Vagina (tissue), 2 donors: ENCODE measurements at regions of chr18 and their contacts with region 1.

Region 1: DNA sequence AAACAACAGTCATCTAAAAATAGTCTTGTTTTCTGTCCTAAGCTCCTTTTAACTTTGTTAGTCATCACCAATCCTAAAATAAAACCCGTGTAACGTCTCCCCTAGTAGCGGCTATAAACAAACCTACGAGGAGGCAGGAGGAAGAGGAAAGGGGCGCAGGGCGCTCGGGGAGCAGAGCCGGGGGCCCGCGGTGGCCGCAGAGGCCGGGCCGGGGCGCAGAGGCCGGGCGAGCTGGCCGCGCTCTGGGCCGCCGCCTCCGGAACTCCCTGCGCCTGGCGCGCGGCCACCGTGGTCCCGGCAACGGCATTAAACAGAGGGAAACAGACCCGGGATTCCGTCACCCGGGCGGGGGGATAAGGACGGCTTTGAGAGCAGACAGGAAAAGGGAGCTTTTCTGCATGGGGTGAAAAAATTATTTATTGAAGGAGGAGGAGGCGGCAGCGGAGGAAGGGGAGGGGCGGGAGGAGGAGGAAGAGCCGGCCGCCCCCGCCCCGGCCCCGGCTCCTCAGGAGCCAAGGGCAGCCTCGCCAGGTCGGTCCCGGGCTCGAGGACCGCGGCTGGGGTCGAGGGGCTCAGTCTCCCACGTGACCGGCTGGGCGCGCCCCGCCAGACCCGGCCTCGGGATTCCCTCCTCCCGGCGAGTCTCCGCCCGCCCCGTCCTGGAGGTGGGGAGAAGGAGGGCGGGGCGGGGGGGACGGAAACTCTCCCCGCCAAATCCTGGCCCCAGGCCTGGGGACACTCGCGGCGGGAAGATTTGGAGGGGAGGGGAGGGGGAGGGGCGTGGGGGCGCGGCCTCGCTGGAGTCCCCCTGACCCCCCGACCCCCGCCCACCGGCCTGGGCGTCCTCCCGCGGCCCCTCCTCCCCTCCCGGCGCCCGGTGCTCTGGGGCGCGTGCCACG is 1.8 kb upstream of the NFATC1 start:
- DNase-seq: no peak
- H3K4me3 ChIP-seq: peak overlapping the region; percentile 53 to 88
- H3K27ac ChIP-seq: peak overlapping the region; percentile 91
- H3K4me1 ChIP-seq: peaks cover 29% of the 10 kb centered on the region
- H3K27me3 ChIP-seq: no peaks in the 10 kb centered on the region
- CTCF ChIP-seq: no peak
- POLR2A ChIP-seq: no peak

Region 2: GRCh38 chr18:79069792-79070151 is 324.1 kb before region 1 on chr18:
- intact Hi-C with region 1: loop called (anchors 5 kb)
- DNase-seq: no peak
- H3K4me3 ChIP-seq: peak overlapping the region; percentile 86 to 97
- H3K27ac ChIP-seq: peak overlapping the region; percentile 96
- H3K4me1 ChIP-seq: peaks cover 26% of the 10 kb centered on the region
- H3K27me3 ChIP-seq: no peaks in the 10 kb centered on the region
- CTCF ChIP-seq: no peak
- POLR2A ChIP-seq: no peak

Region 3: DNA sequence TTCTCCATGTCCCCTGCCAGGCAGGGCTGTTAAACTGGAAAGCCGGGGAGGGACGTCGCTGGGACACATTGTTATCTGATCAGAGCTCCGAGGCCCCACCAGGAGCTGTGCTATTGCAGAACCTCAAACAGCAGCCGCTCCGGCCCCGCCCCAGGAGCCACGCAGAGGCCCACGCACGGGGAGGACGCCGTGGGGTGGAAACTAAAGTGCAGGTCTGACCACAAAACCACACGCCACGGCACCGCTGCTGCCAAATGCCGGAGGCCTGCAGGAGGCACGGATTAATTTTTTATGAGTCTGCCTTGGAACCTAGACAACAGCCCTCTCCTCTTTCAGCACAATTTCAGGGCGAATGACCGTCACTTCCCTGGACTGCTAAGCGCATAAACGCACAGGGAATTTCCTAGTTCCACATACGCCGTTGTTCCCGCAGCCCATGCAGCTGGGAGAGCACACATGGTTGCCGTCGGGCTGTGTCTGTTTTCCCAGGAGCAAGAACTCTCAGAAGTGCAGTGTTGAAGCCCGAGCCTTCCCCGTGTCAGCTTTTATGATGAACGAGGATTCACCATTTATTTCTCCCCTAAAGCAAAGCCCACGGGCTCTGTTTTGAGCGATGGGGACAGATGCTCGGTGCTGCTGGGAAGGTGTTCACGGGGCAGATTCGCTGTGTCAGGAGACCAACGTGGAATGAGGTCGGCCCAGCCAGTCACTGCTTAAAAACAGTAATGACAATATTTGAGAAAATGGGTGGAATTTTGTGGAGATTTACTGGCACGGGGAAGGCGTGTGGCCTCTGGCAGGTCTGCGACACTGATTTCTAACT is 45.5 kb after region 1 on chr18:
- intact Hi-C with region 1: no loop called
- DNase-seq: no peak
- H3K4me3 ChIP-seq: peak overlapping the region in 1 of 2 donors; percentile 9
- H3K27ac ChIP-seq: no peak overlapping the region
- H3K4me1 ChIP-seq: peaks cover 20% of the 10 kb centered on the region
- H3K27me3 ChIP-seq: no peaks in the 10 kb centered on the region
- CTCF ChIP-seq: no peak
- POLR2A ChIP-seq: no peak

Region 4: GRCh38 chr18:79458131-79458838 is 64.4 kb after region 1 on chr18:
- intact Hi-C with region 1: loop called (anchors 5 kb)
- DNase-seq: no peak
- H3K4me3 ChIP-seq: no peak overlapping the region
- H3K27ac ChIP-seq: peak overlapping the region; percentile 16
- H3K4me1 ChIP-seq: peaks cover 27% of the 10 kb centered on the region
- H3K27me3 ChIP-seq: no peaks in the 10 kb centered on the region
- CTCF ChIP-seq: no peak
- POLR2A ChIP-seq: no peak

Region 5: GRCh38 chr18:79507076-79507545 is 113.2 kb after region 1 on chr18:
- intact Hi-C with region 1: loop called (anchors 2 kb)
- DNase-seq: no peak
- H3K4me3 ChIP-seq: peak overlapping the region; percentile 39 to 44
- H3K27ac ChIP-seq: peak overlapping the region; percentile 86
- H3K4me1 ChIP-seq: peaks cover 21% of the 10 kb centered on the region
- H3K27me3 ChIP-seq: no peaks in the 10 kb centered on the region
- CTCF ChIP-seq: no peak
- POLR2A ChIP-seq: no peak